B cell (primary cell): ENCODE measurements at regions of chr3 and their contacts with region 1.

Region 1: GRCh38 chr3:156674046-156674910 is at the start of gene TIPARP:
- DNase-seq: peak; percentile 100
- ATAC-seq: peak; percentile 81
- H3K4me3 ChIP-seq: peak within 1 kb of the TSS; percentile 80 to 96 (median 81)
- H3K4me3 Mint-ChIP-seq: peak within 1 kb of the TSS; percentile 91
- H3K27ac ChIP-seq: peak within 1 kb of the TSS; percentile 86 to 94
- H3K27ac Mint-ChIP-seq: peak within 1 kb of the TSS; percentile 99
- H3K4me1 ChIP-seq: peaks cover 25 to 30% of the 10 kb centered on the region in 2 donors
- H3K4me1 Mint-ChIP-seq: peaks cover 47% of the 10 kb centered on the region
- H3K27me3 ChIP-seq: no peaks in the 10 kb centered on the region
- H3K27me3 Mint-ChIP-seq: no peaks in the 10 kb centered on the region
- CTCF ChIP-seq: peak; percentile 83
- total RNA-seq, gene TIPARP: 40.9 and 42.5 TPM in 2 replicates

Region 2: GRCh38 chr3:155906900-155907299 is 767.4 kb before region 1 on chr3:
- CTCF ChIA-PET with region 1: no interaction called
- POLR2A ChIA-PET with region 1: no interaction called
- intact Hi-C with region 1: no loop called
- DNase-seq: no peak
- ATAC-seq: no peak
- H3K4me3 ChIP-seq: no peak overlapping the region
- H3K4me3 Mint-ChIP-seq: no peak overlapping the region
- H3K27ac ChIP-seq: no peak overlapping the region
- H3K27ac Mint-ChIP-seq: no peak overlapping the region
- H3K4me1 ChIP-seq: peaks cover 0 to 4% of the 10 kb centered on the region in 2 donors
- H3K4me1 Mint-ChIP-seq: peaks cover 9% of the 10 kb centered on the region
- H3K27me3 ChIP-seq: no peaks in the 10 kb centered on the region
- H3K27me3 Mint-ChIP-seq: no peaks in the 10 kb centered on the region
- CTCF ChIP-seq: no peak

Region 3: DNA sequence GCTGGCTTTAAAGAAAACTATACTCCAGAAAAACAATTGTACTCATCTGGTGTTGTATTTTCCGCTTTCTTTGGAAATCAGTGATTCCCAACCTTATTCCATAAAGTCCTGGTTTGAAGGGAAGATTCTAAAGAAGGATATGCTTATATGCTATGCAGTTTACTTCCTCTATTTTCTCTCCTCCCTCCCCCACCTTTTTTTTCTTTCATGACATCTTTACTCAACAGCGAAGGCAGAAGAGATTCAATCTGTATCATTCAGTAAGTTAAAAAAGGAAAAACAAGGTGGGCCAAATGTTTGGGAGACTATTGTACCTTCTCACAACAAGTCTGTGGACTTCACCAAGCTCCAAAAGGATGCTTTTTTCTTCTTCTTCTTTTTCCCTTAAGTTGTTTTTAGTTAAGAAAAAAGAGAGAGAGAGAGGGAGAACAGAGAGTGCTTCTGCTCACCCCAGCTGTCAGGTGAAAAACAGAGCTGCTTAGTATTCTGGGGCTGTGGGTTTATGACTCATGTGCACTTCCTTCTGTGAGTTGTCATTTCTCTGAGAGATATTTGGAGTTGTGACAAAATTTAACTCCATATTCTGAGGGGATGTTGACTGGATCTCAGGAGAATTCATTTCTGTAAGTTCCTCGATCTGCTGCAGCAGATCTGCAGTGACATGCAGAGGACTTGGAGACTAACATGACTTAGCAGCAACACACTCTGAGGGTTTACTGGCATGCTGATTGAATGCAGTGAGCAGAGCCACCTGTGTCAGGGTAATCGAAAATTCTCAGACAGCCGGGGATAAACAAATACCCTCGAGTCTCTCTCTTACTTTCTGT is 190.1 kb before region 1 on chr3:
- CTCF ChIA-PET with region 1: interaction called, 5 read pairs
- POLR2A ChIA-PET with region 1: no interaction called
- intact Hi-C with region 1: loop called (anchors 2 kb)
- DNase-seq: peak; percentile 62
- ATAC-seq: peak; percentile 79
- H3K4me3 ChIP-seq: peak overlapping the region in 2 of 5 experiments; percentile 36 to 59
- H3K4me3 Mint-ChIP-seq: peak overlapping the region; percentile 69
- H3K27ac ChIP-seq: peak overlapping the region; percentile 78 to 83
- H3K27ac Mint-ChIP-seq: peak overlapping the region; percentile 28
- H3K4me1 ChIP-seq: peaks cover 24 to 25% of the 10 kb centered on the region in 2 donors
- H3K4me1 Mint-ChIP-seq: peaks cover 30% of the 10 kb centered on the region
- H3K27me3 ChIP-seq: no peaks in the 10 kb centered on the region
- H3K27me3 Mint-ChIP-seq: peaks cover 1% of the 10 kb centered on the region
- CTCF ChIP-seq: no peak

Region 4: GRCh38 chr3:156691920-156692319 is 17.6 kb after region 1 on chr3:
- CTCF ChIA-PET with region 1: no interaction called
- POLR2A ChIA-PET with region 1: no interaction called
- intact Hi-C with region 1: loop called (anchors 2 kb)
- DNase-seq: no peak
- ATAC-seq: no peak
- H3K4me3 ChIP-seq: no peak overlapping the region
- H3K4me3 Mint-ChIP-seq: no peak overlapping the region
- H3K27ac ChIP-seq: no peak overlapping the region
- H3K27ac Mint-ChIP-seq: no peak overlapping the region
- H3K4me1 ChIP-seq: peaks cover 0 to 6% of the 10 kb centered on the region in 2 donors
- H3K4me1 Mint-ChIP-seq: peaks cover 27% of the 10 kb centered on the region
- H3K27me3 ChIP-seq: no peaks in the 10 kb centered on the region
- H3K27me3 Mint-ChIP-seq: no peaks in the 10 kb centered on the region
- CTCF ChIP-seq: no peak

Region 5: GRCh38 chr3:156716105-156716862 is 42.0 kb after region 1 on chr3:
- CTCF ChIA-PET with region 1: no interaction called
- POLR2A ChIA-PET with region 1: no interaction called
- intact Hi-C with region 1: no loop called
- DNase-seq: no peak
- ATAC-seq: no peak
- H3K4me3 ChIP-seq: no peak overlapping the region
- H3K4me3 Mint-ChIP-seq: no peak overlapping the region
- H3K27ac ChIP-seq: no peak overlapping the region
- H3K27ac Mint-ChIP-seq: no peak overlapping the region
- H3K4me1 ChIP-seq: no peaks in the 10 kb centered on the region
- H3K4me1 Mint-ChIP-seq: no peaks in the 10 kb centered on the region
- H3K27me3 ChIP-seq: no peaks in the 10 kb centered on the region
- H3K27me3 Mint-ChIP-seq: no peaks in the 10 kb centered on the region
- CTCF ChIP-seq: no peak

Region 6: GRCh38 chr3:157029365-157029790 is 355.1 kb after region 1 on chr3:
- CTCF ChIA-PET with region 1: interaction called, 3 read pairs
- POLR2A ChIA-PET with region 1: interaction called, 4 read pairs
- intact Hi-C with region 1: loop called (anchors 1 kb)
- DNase-seq: peak; percentile 85
- ATAC-seq: peak; percentile 93
- H3K4me3 ChIP-seq: no peak overlapping the region
- H3K4me3 Mint-ChIP-seq: peak overlapping the region; percentile 44
- H3K27ac ChIP-seq: peak overlapping the region in 1 of 2 donors; percentile 17
- H3K27ac Mint-ChIP-seq: peak overlapping the region; percentile 72
- H3K4me1 ChIP-seq: peaks cover 14 to 26% of the 10 kb centered on the region in 2 donors
- H3K4me1 Mint-ChIP-seq: peaks cover 28% of the 10 kb centered on the region
- H3K27me3 ChIP-seq: no peaks in the 10 kb centered on the region
- H3K27me3 Mint-ChIP-seq: no peaks in the 10 kb centered on the region
- CTCF ChIP-seq: no peak

Region 7: GRCh38 chr3:157136647-157137387 is 462.5 kb after region 1 on chr3:
- CTCF ChIA-PET with region 1: interaction called, 11 read pairs
- POLR2A ChIA-PET with region 1: interaction called, 7 read pairs
- intact Hi-C with region 1: loop called (anchors 1 kb)
- DNase-seq: no peak
- ATAC-seq: no peak
- H3K4me3 ChIP-seq: no peak overlapping the region
- H3K4me3 Mint-ChIP-seq: no peak overlapping the region
- H3K27ac ChIP-seq: peak overlapping the region in 1 of 2 donors; percentile 14
- H3K27ac Mint-ChIP-seq: no peak overlapping the region
- H3K4me1 ChIP-seq: peaks cover 4 to 7% of the 10 kb centered on the region in 2 donors
- H3K4me1 Mint-ChIP-seq: peaks cover 6% of the 10 kb centered on the region
- H3K27me3 ChIP-seq: no peaks in the 10 kb centered on the region
- H3K27me3 Mint-ChIP-seq: no peaks in the 10 kb centered on the region
- CTCF ChIP-seq: no peak